ENCODE measurements at regions of chr1 and their contacts with region 1.

Region 1: DNA sequence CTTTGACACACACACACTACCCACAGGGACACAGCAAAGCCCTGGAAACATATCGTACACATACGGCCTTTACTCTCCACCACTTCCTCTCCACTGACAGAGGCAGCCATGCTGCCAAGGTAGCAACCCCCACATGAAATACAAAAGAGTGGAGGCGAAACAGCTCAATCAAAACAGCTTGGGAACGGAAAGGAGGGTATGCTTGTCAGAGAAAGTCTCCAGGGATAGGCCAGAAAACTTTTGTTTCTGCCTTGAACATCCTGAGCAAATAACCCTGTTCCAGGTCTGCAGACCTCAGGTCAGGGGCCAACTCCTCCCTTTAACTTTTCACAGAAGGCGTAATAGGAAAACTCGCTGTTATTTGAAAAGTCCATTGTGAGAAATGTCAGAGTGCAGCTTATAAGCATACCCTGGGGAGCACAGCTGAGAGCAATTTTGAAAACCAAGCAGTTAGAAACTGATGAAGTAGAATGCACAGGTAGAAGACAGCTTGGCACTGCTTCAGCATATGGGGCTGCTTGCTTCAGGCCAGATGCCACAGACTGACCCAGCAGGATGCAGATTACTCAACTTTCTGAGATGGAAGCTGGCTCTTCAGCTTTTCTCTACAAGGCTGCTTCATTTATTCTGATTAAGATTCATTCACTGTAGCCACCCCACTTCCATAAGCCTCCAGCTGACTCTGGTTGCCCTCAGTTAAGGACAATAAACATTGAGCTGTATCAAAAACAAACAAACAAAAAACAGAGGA is 18.0 kb downstream of the KIAA0319L start:
- DNase-seq: peak; percentile 87
- H3K4me3 Mint-ChIP-seq: peak overlapping the region; percentile 75
- H3K27ac Mint-ChIP-seq: peak overlapping the region; percentile 86
- H3K4me1 Mint-ChIP-seq: peaks cover 58% of the 10 kb centered on the region
- H3K27me3 Mint-ChIP-seq: no peaks in the 10 kb centered on the region

Region 2: GRCh38 chr1:35505908-35506798 is 33.1 kb before region 1 on chr1:
- intact Hi-C with region 1: loop called (anchors 1 kb)
- DNase-seq: peak; percentile 91
- H3K4me3 Mint-ChIP-seq: peak overlapping the region; percentile 79
- H3K27ac Mint-ChIP-seq: peak overlapping the region; percentile 91
- H3K4me1 Mint-ChIP-seq: peaks cover 61% of the 10 kb centered on the region
- H3K27me3 Mint-ChIP-seq: no peaks in the 10 kb centered on the region

Measured in activated CD4-positive, alpha-beta T cell treated with anti-CD3 and anti-CD28 coated beads, Interleukin-2, amount 10 ng/mL, durations not matched to agents 24 days and 14 days (primary cell).